K562 (cell line): ENCODE measurements at regions of chr19 and their contacts with region 1.

Region 1: DNA sequence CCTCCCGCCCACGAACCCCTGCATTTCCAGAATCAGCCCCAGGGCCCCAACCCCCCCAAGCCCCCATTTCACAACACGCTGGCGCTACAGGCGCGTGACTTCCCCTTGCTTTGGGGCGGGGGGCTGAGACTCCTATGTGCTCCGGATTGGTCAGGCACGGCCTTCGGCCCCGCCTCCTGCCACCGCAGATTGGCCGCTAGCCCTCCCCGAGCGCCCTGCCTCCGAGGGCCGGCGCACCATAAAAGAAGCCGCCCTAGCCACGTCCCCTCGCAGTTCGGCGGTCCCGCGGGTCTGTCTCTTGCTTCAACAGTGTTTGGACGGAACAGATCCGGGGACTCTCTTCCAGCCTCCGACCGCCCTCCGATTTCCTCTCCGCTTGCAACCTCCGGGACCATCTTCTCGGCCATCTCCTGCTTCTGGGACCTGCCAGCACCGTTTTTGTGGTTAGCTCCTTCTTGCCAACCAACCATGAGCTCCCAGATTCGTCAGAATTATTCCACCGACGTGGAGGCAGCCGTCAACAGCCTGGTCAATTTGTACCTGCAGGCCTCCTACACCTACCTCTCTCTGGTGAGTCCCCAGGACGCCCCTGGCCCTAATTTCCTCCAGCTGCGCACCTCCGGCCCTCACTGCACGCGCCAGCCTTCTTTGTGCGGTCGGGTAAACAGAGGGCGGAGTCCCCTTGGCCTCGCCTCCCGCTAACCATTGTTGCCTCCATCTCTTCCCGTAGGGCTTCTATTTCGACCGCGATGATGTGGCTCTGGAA is at the start of gene FTL:
- DNase-seq: peak; percentile 89 to 99 (median 94)
- ATAC-seq: peak; percentile 72
- H3K4me3 ChIP-seq: peak within 1 kb of the TSS; percentile 70
- H3K27ac ChIP-seq: peak within 1 kb of the TSS; percentile 99
- H3K4me1 ChIP-seq: peaks cover 38 to 66% of the 10 kb centered on the region in 2 experiments
- H3K27me3 ChIP-seq: no peaks in the 10 kb centered on the region
- CTCF ChIP-seq: no peak
- EP300 ChIP-seq: peak; percentile 36; the same call in 1 of the 2 replicates
- POLR2A ChIP-seq: peak; percentile 100
- RAD21 ChIP-seq: peak in 1 of 2 experiments; percentile 21; a peak in 2 of 4 replicates
- polyA plus RNA-seq, gene FTL: 17,458 to 27,415 TPM

Region 2: GRCh38 chr19:48745208-48745995 is 219.8 kb before region 1 on chr19:
- CTCF ChIA-PET with region 1: no interaction called
- POLR2A ChIA-PET with region 1: no interaction called
- in situ Hi-C with region 1: no loop called
- intact Hi-C with region 1: no loop called
- DNase-seq: peak; percentile 63 to 85 (median 68)
- ATAC-seq: peak; percentile 32
- H3K4me3 ChIP-seq: no peak overlapping the region
- H3K27ac ChIP-seq: no peak overlapping the region
- H3K4me1 ChIP-seq: peaks cover 39 to 47% of the 10 kb centered on the region in 2 experiments
- H3K27me3 ChIP-seq: no peaks in the 10 kb centered on the region
- CTCF ChIP-seq: no peak
- EP300 ChIP-seq: no peak
- POLR2A ChIP-seq: no peak
- RAD21 ChIP-seq: no peak

Region 3: GRCh38 chr19:48795055-48795684 is 170.1 kb before region 1 on chr19:
- CTCF ChIA-PET with region 1: interaction called, 36 read pairs
- POLR2A ChIA-PET with region 1: interaction called, 13 read pairs
- in situ Hi-C with region 1: loop called (anchors 5 kb)
- intact Hi-C with region 1: loop called (anchors 2 kb)
- DNase-seq: peak; percentile 90 to 95 (median 92)
- ATAC-seq: peak; percentile 99
- H3K4me3 ChIP-seq: peak overlapping the region; percentile 53
- H3K27ac ChIP-seq: peak overlapping the region; percentile 41; the same call in 2 of the 3 replicates
- H3K4me1 ChIP-seq: peaks cover 3 to 24% of the 10 kb centered on the region in 2 experiments; a peak in 4 of 5 replicates
- H3K27me3 ChIP-seq: no peaks in the 10 kb centered on the region
- CTCF ChIP-seq: peak; percentile 91 to 95 (median 94)
- EP300 ChIP-seq: 0 out of 2 replicates have a peak, but pooled peaks have one; percentile 20
- POLR2A ChIP-seq: peak; percentile 60
- RAD21 ChIP-seq: peak; percentile 95 to 96

Region 4: DNA sequence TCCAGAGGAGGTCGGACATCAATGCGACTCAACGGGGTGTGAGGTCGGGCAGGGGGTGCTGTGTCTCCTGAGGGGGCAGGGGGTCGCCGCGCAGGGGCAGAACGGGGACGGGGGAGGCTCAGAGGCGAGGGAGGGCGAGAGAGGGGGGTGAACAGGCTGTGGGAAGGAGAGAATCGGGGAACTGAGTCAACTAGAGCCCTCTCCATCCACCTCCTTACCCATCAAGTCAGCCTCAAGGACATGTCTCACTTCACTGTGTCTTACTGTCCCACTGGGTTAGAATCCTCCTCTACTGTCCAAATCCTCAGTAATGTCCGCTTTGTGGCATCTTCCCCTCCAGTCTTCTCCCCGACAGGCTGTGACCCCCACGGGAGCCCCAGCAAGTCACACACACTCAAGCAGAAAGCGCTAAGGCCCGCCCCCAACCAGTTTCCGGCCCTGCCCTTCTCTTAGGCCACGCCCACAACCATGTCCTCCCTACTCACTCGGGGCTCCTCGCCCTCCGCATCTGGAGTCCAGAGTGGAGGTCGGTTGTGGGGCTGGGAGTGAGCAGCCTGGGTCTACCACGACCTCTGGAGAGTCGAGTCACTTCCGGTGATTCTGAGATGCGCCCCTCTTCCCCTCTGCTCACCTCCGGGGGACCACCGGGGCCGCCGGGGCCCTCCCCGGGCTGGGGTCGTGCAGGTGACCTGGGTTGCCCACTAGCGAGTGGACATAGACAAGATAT is 106.1 kb before region 1 on chr19:
- CTCF ChIA-PET with region 1: no interaction called
- POLR2A ChIA-PET with region 1: interaction called, 16 read pairs
- in situ Hi-C with region 1: no loop called
- intact Hi-C with region 1: no loop called
- DNase-seq: peak; percentile 89 to 95 (median 90)
- ATAC-seq: peak; percentile 90
- H3K4me3 ChIP-seq: peak overlapping the region; percentile 58
- H3K27ac ChIP-seq: peak overlapping the region; percentile 81
- H3K4me1 ChIP-seq: peaks cover 20 to 43% of the 10 kb centered on the region in 2 experiments
- H3K27me3 ChIP-seq: no peaks in the 10 kb centered on the region
- CTCF ChIP-seq: no peak
- EP300 ChIP-seq: no peak
- POLR2A ChIP-seq: peak; percentile 79
- RAD21 ChIP-seq: no peak

Region 5: DNA sequence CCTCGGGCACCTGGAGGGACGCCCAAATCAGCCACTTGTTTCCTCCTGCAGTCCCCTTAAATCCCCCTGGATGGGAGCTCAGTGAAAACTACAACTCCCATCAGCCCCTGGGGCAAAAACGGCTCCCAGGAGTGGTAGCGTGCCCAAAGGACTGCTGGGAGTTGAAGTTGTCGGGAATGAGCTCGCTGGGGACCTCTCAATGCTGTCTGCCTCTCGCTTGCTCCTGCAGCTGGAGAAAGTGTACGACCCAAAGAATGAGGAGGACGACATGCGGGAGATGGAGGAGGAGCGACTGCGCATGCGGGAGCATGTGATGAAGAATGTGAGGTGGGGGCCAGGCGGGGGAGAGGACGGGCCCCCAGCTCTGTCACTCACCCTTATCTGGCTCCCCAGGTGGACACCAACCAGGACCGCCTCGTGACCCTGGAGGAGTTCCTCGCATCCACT is 46.4 kb before region 1 on chr19:
- CTCF ChIA-PET with region 1: no interaction called
- POLR2A ChIA-PET with region 1: interaction called, 37 read pairs
- in situ Hi-C with region 1: no loop called
- intact Hi-C with region 1: no loop called
- DNase-seq: peak; percentile 72 to 81 (median 78)
- ATAC-seq: peak; percentile 93
- H3K4me3 ChIP-seq: no peak overlapping the region
- H3K27ac ChIP-seq: no peak overlapping the region
- H3K4me1 ChIP-seq: peaks cover 0 to 13% of the 10 kb centered on the region in 2 experiments; a peak in 3 of 5 replicates
- H3K27me3 ChIP-seq: no peaks in the 10 kb centered on the region
- CTCF ChIP-seq: no peak
- EP300 ChIP-seq: 0 out of 2 replicates have a peak, but pooled peaks have one; percentile 26
- POLR2A ChIP-seq: no peak
- RAD21 ChIP-seq: no peak

Region 6: DNA sequence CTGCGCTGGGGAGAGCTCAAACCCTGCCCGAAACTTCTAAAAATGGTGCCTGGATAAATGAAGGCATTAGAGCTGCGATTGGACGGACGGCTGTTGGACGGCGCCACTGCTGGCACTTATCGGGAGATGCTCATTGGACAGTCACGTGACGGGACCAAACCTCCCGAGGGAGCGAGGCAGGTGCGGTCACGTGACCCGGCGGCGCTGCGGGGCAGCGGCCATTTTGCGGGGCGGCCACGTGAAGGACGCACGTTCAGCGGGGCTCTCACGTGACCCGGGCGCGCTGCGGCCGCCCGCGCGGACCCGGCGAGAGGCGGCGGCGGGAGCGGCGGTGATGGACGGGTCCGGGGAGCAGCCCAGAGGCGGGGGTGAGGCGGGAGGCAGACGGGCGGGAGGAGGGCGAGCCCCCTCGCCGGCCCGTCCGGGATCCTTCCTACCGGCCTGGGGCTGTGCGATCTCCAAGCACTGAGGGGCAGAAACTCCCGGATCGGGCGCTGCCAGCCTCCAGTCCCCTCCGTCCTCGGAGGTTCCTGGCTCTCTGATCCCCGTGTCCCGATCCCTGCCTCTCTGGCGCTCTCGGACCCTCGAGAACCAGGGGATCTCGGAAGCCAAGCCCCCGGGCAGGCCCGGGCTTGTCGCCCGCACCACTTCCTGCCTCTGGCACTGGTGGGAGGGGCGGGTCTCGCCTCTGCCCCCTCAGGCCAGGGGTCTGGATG is 10.5 kb before region 1 on chr19 and contains the start of gene BAX:
- CTCF ChIA-PET with region 1: no interaction called
- POLR2A ChIA-PET with region 1: interaction called, 48 read pairs
- in situ Hi-C with region 1: no loop called
- intact Hi-C with region 1: no loop called
- DNase-seq: peak; percentile 95 to 100 (median 97)
- ATAC-seq: peak; percentile 92
- H3K4me3 ChIP-seq: peak within 1 kb of the TSS; percentile 79
- H3K27ac ChIP-seq: peak within 1 kb of the TSS; percentile 77
- H3K4me1 ChIP-seq: peaks cover 31 to 38% of the 10 kb centered on the region in 2 experiments; a peak in 4 of 5 replicates
- H3K27me3 ChIP-seq: no peaks in the 10 kb centered on the region
- CTCF ChIP-seq: peak in 2 of 3 experiments; percentile 13 to 33; a peak in 2 of 6 replicates
- EP300 ChIP-seq: peak; percentile 38; the same call in 1 of the 2 replicates
- POLR2A ChIP-seq: peak; percentile 68
- RAD21 ChIP-seq: peak; percentile 4 to 34; a peak in 2 of 4 replicates
- polyA plus RNA-seq, gene BAX: 3.2 to 5.5 TPM

Region 7: GRCh38 chr19:48993175-48994034 is 28.2 kb after region 1 on chr19 and contains the starts of genes GYS1 and RUVBL2:
- CTCF ChIA-PET with region 1: no interaction called
- POLR2A ChIA-PET with region 1: interaction called, 42 read pairs
- in situ Hi-C with region 1: no loop called
- intact Hi-C with region 1: no loop called
- DNase-seq: peak; percentile 98 to 100 (median 99)
- ATAC-seq: peak; percentile 95
- H3K4me3 ChIP-seq: peak within 1 kb of the TSS; percentile 87
- H3K27ac ChIP-seq: peak within 1 kb of the TSS; percentile 91
- H3K4me1 ChIP-seq: peaks cover 5 to 30% of the 10 kb centered on the region in 2 experiments; a peak in 4 of 5 replicates
- H3K27me3 ChIP-seq: no peaks in the 10 kb centered on the region
- CTCF ChIP-seq: peak; percentile 97 to 98 (median 98)
- EP300 ChIP-seq: peak; percentile 85
- POLR2A ChIP-seq: peak; percentile 96
- RAD21 ChIP-seq: peak; percentile 36 to 46
- polyA plus RNA-seq, gene GYS1: 1.9 to 2.2 TPM
- polyA plus RNA-seq, gene RUVBL2: 71.4 to 95.3 TPM

Region 8: GRCh38 chr19:49042177-49042576 is 77.0 kb after region 1 on chr19:
- CTCF ChIA-PET with region 1: no interaction called
- POLR2A ChIA-PET with region 1: no interaction called
- in situ Hi-C with region 1: no loop called
- intact Hi-C with region 1: no loop called
- DNase-seq: no peak
- ATAC-seq: no peak
- H3K4me3 ChIP-seq: no peak overlapping the region
- H3K27ac ChIP-seq: no peak overlapping the region
- H3K4me1 ChIP-seq: peaks cover 0 to 7% of the 10 kb centered on the region in 2 experiments; a peak in 2 of 5 replicates
- H3K27me3 ChIP-seq: no peaks in the 10 kb centered on the region; a peak in 1 of 5 replicates
- CTCF ChIP-seq: no peak
- EP300 ChIP-seq: no peak
- POLR2A ChIP-seq: no peak
- RAD21 ChIP-seq: no peak